Calu3 (cell line): ENCODE measurements at regions of chr2 and their contacts with region 1.

Region 1: DNA sequence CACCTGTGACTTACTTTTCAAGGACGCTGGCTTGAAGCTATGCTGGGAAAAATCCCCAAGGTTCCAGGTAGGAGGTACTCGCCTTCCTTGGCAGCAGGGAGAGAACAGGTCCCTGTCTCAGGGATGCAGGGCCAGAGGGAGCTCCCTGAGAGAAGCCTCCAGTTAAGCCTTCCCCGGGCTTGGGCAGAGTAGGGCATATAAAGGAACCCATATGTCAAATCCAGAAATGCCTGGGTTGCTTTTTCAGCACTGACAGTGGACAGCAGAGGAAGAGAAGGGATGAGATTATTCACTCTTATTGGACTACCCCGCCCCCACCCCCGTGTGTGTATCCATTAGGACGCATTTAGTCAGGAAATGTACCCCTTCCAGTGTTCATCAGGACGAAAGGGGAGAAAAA is 89.3 kb upstream of the TEX51 start:
- DNase-seq: no peak
- H3K4me3 Mint-ChIP-seq: no peak overlapping the region
- H3K27ac Mint-ChIP-seq: no peak overlapping the region
- H3K4me1 Mint-ChIP-seq: peaks cover 7% of the 10 kb centered on the region
- H3K27me3 Mint-ChIP-seq: no peaks in the 10 kb centered on the region
- CTCF ChIP-seq: no peak

Region 2: GRCh38 chr2:126644630-126645191 is 164.6 kb before region 1 on chr2:
- CTCF ChIA-PET with region 1: no interaction called
- intact Hi-C with region 1: no loop called
- DNase-seq: no peak
- H3K4me3 Mint-ChIP-seq: no peak overlapping the region
- H3K27ac Mint-ChIP-seq: no peak overlapping the region
- H3K4me1 Mint-ChIP-seq: no peaks in the 10 kb centered on the region
- H3K27me3 Mint-ChIP-seq: no peaks in the 10 kb centered on the region
- CTCF ChIP-seq: no peak

Region 3: GRCh38 chr2:126971481-126972278 is 162.3 kb after region 1 on chr2:
- CTCF ChIA-PET with region 1: no interaction called
- intact Hi-C with region 1: loop called (anchors 5 kb)
- DNase-seq: peak; percentile 80
- H3K4me3 Mint-ChIP-seq: peak overlapping the region; percentile 43
- H3K27ac Mint-ChIP-seq: no peak overlapping the region
- H3K4me1 Mint-ChIP-seq: no peaks in the 10 kb centered on the region
- H3K27me3 Mint-ChIP-seq: peaks cover 56% of the 10 kb centered on the region
- CTCF ChIP-seq: peak; percentile 79